Endothelial cell of umbilical vein (primary cell): ENCODE measurements at regions of chr11 and their contacts with region 1.

Region 1: GRCh38 chr11:60775420-60775961 is 9.6 kb upstream of the MS4A10 start:
- DNase-seq: peak; percentile 95
- H3K4me3 ChIP-seq: no peak overlapping the region
- H3K27ac ChIP-seq: peak overlapping the region; percentile 70
- H3K4me1 ChIP-seq: peaks cover 29% of the 10 kb centered on the region
- H3K27me3 ChIP-seq: no peaks in the 10 kb centered on the region
- CTCF ChIP-seq: peak; percentile 84 to 95
- POLR2A ChIP-seq: no peak

Region 2: GRCh38 chr11:60762851-60763691 is 12.4 kb before region 1 on chr11:
- CTCF ChIA-PET with region 1: interaction called, 16 read pairs
- POLR2A ChIA-PET with region 1: no interaction called
- dilution Hi-C with region 1: no loop called
- intact Hi-C with region 1: no loop called
- DNase-seq: no peak
- H3K4me3 ChIP-seq: no peak overlapping the region
- H3K27ac ChIP-seq: no peak overlapping the region
- H3K4me1 ChIP-seq: no peaks in the 10 kb centered on the region
- H3K27me3 ChIP-seq: peaks cover 12 to 24% of the 10 kb centered on the region in 2 experiments
- CTCF ChIP-seq: peak; percentile 6 to 17
- POLR2A ChIP-seq: no peak

Region 3: GRCh38 chr11:60786811-60787567 is 11.5 kb after region 1 on chr11:
- CTCF ChIA-PET with region 1: interaction called, 18 read pairs
- POLR2A ChIA-PET with region 1: no interaction called
- dilution Hi-C with region 1: no loop called
- intact Hi-C with region 1: loop called (anchors 1 kb)
- DNase-seq: peak; percentile 96
- H3K4me3 ChIP-seq: no peak overlapping the region
- H3K27ac ChIP-seq: peak overlapping the region; percentile 78
- H3K4me1 ChIP-seq: peaks cover 28% of the 10 kb centered on the region
- H3K27me3 ChIP-seq: no peaks in the 10 kb centered on the region
- CTCF ChIP-seq: no peak
- POLR2A ChIP-seq: no peak

Region 4: GRCh38 chr11:60887556-60887955 is 112.1 kb after region 1 on chr11:
- CTCF ChIA-PET with region 1: interaction called, 148 read pairs
- POLR2A ChIA-PET with region 1: interaction called, 3 read pairs
- dilution Hi-C with region 1: no loop called
- intact Hi-C with region 1: loop called (anchors 1 kb)
- DNase-seq: peak; percentile 56
- H3K4me3 ChIP-seq: no peak overlapping the region
- H3K27ac ChIP-seq: no peak overlapping the region
- H3K4me1 ChIP-seq: peaks cover 20% of the 10 kb centered on the region
- H3K27me3 ChIP-seq: no peaks in the 10 kb centered on the region
- CTCF ChIP-seq: peak; percentile 53 to 66
- POLR2A ChIP-seq: no peak

Region 5: DNA sequence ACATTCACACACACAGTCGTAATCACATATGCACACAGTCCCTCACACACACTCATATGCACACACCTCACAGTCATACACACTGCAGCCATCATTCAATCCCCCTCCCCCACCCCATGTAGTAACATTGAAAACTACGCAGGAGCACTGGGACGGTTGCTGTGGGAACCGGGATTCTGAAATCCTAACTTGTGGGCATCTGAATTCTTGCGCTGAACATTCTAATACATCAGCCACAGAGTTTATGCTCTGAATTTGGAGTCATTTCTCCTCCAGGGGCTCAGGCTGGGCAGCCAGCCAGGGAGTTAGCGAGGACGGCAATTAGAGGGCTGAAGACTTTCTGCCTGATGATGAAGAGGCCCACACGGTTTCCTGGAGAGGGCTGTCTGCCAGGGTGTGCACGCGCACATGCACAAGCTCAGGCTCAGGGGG is 228.7 kb after region 1 on chr11:
- CTCF ChIA-PET with region 1: no interaction called
- POLR2A ChIA-PET with region 1: no interaction called
- dilution Hi-C with region 1: no loop called
- intact Hi-C with region 1: no loop called
- DNase-seq: no peak
- H3K4me3 ChIP-seq: no peak overlapping the region
- H3K27ac ChIP-seq: no peak overlapping the region
- H3K4me1 ChIP-seq: no peaks in the 10 kb centered on the region
- H3K27me3 ChIP-seq: peaks cover 31 to 37% of the 10 kb centered on the region in 2 experiments
- CTCF ChIP-seq: no peak
- POLR2A ChIP-seq: no peak

Region 6: DNA sequence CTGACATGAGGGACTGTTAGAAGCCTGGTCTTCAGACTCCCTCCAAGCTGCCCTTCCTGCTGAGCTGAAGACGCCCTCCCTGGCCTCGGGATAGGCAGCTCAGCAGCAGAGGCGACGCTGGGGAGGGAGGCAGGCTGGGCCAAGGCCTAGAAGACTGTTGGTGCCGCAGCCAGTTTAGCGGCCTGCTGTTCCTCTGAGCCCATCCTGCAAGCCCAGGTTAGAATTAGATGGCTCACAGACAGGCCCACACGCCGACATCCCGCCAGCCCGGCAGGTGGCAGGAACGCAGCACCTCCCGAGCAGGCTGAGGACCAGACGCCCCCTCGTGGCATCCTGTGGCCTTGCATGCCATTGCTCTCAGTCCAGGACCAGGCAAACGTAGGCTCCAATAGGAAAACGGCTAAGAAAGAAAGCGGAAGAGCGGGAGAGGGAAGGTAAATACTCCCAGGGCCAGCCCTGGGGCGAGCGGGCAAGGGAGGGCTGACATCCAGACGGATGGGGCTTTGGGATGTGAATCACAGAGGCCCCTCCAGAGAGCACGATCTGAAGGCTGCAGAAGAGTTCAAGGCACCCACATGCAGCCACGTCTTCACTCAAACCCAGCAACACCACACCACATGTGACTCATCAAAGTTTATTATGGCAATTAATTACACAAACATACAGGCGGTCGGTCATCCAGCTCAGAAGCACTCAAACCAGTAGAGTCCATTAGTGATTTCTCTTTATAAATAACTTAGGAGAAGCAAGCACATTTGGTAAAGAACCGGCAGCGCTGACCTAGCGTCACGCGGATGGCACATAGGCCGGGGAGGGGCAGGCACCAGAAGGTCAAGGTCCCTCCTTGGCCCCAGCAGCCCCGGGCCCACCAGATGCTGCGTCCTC is 354.4 kb after region 1 on chr11:
- CTCF ChIA-PET with region 1: interaction called, 18 read pairs
- POLR2A ChIA-PET with region 1: no interaction called
- dilution Hi-C with region 1: no loop called
- intact Hi-C with region 1: loop called (anchors 1 kb)
- DNase-seq: peak; percentile 93
- H3K4me3 ChIP-seq: no peak overlapping the region
- H3K27ac ChIP-seq: peak overlapping the region; percentile 2
- H3K4me1 ChIP-seq: peaks cover 3% of the 10 kb centered on the region
- H3K27me3 ChIP-seq: peaks cover 9 to 10% of the 10 kb centered on the region in 2 experiments
- CTCF ChIP-seq: peak; percentile 100
- POLR2A ChIP-seq: no peak

Region 7: DNA sequence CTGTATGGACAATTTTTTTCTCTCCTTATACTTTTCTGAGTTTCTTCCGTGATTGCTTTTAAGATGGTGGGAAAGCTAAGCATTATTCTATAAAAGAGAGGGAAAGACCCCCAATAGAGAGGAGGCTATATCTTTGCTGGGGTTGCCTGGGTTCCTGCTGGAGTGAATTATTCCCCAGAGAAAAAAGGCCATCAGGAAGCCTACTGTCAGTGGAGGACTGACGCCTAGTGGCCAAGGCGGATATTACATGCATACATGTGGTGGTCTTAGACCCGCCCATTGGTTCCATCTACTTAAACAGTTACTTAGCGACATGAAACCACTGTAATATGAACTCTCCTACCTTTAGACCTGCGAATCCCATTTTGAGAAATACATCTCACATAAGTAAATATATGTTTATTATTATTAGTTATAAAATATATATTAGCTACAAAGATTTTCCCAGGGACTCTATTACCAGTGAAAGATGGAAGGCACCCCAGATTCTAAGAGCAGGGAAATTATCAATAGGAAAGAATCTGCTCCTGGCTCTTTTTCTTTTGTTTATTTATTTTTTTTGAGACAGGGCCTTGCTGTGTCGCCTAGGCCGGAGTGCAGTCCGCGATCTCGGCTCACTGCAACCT is 412.1 kb after region 1 on chr11:
- CTCF ChIA-PET with region 1: interaction called, 3 read pairs
- POLR2A ChIA-PET with region 1: no interaction called
- dilution Hi-C with region 1: no loop called
- intact Hi-C with region 1: loop called (anchors 2 kb)
- DNase-seq: peak; percentile 81
- H3K4me3 ChIP-seq: no peak overlapping the region
- H3K27ac ChIP-seq: no peak overlapping the region
- H3K4me1 ChIP-seq: no peaks in the 10 kb centered on the region
- H3K27me3 ChIP-seq: no peaks in the 10 kb centered on the region
- CTCF ChIP-seq: peak; percentile 84 to 90
- POLR2A ChIP-seq: no peak